Activated CD4-positive, alpha-beta memory T cell treated with anti-CD3 and anti-CD28 coated beads, Interleukin-2, amount 10 ng/mL, durations not matched to agents 7 days and 5 days (primary cell): ENCODE measurements at regions of chr1 and their contacts with region 1.

Region 1: GRCh38 chr1:87328272-87329050 is at the start of gene LMO4:
- DNase-seq: peak; percentile 89
- H3K4me3 Mint-ChIP-seq: peak within 1 kb of the TSS; percentile 89
- H3K27ac Mint-ChIP-seq: peak within 1 kb of the TSS; percentile 90
- H3K4me1 Mint-ChIP-seq: peaks cover 28% of the 10 kb centered on the region
- H3K27me3 Mint-ChIP-seq: peaks cover 5% of the 10 kb centered on the region
- total RNA-seq, gene LMO4: 52.8 to 54.3 TPM

Region 2: DNA sequence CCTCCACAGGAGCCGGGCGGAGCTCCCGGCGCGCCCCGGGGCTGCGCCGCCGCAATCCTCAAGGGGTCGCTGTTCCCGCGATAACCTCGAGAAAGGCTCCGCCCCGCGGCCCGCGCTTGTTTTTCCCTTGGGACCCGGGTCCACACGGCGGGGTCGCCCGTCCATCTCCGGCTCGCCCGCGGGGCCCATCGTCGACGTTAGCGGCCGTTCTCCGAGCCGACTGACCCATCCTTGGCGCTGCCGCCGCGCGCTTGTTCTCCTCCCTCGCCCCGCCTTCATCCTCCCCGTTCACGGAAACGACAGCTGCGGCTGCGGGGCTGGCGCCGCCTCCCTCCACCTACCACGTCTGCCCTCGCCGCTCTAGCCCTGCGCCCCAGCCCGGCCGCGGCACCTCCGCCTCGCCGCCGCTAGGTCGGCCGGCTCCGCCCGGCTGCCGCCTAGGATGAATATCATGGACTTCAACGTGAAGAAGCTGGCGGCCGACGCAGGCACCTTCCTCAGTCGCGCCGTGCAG is 623.9 kb before region 1 on chr1 and contains the start of gene SH3GLB1:
- CTCF ChIA-PET with region 1: interaction called, 3 read pairs
- POLR2A ChIA-PET with region 1: interaction called, 13 read pairs
- DNase-seq: peak; percentile 90
- H3K4me3 Mint-ChIP-seq: peak within 1 kb of the TSS; percentile 97
- H3K27ac Mint-ChIP-seq: peak within 1 kb of the TSS; percentile 94
- H3K4me1 Mint-ChIP-seq: peaks cover 46% of the 10 kb centered on the region
- H3K27me3 Mint-ChIP-seq: no peaks in the 10 kb centered on the region
- total RNA-seq, gene SH3GLB1: 79.6 to 82.8 TPM

Region 3: GRCh38 chr1:87103074-87103473 is 225.4 kb before region 1 on chr1:
- CTCF ChIA-PET with region 1: no interaction called
- POLR2A ChIA-PET with region 1: no interaction called
- DNase-seq: no peak
- H3K4me3 Mint-ChIP-seq: no peak overlapping the region
- H3K27ac Mint-ChIP-seq: no peak overlapping the region
- H3K4me1 Mint-ChIP-seq: no peaks in the 10 kb centered on the region
- H3K27me3 Mint-ChIP-seq: no peaks in the 10 kb centered on the region

Region 4: DNA sequence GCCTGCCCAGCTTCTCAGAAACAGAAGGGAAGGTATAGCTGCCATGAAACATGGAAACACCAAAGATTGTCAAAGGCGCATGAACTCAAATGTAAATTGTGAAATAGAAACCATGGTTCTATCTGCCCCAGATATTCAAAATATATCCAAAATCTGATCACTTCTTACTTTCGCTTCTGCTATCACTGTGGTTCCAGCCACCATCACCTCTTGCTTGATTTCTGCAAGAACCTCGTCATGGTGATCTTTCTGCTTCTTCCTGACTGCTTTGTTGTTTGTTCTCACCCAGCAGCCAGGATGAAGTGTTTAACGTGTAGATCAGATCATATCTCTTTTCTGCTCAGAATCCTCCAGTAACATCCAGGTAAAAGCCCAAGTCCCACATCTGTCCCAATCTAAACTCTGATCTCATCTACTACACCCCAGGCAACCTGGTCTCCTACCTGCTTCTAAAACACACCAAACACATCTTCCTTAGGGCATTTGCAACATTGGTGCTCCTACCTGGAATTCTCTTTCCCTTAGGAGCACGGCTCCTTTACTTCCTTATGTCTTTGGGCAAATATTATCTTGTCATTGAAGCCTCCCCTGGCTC is 10.3 kb before region 1 on chr1:
- CTCF ChIA-PET with region 1: interaction called, 10 read pairs
- POLR2A ChIA-PET with region 1: interaction called, 3 read pairs
- DNase-seq: no peak
- H3K4me3 Mint-ChIP-seq: no peak overlapping the region
- H3K27ac Mint-ChIP-seq: no peak overlapping the region
- H3K4me1 Mint-ChIP-seq: peaks cover 13% of the 10 kb centered on the region
- H3K27me3 Mint-ChIP-seq: peaks cover 20% of the 10 kb centered on the region

Region 5: DNA sequence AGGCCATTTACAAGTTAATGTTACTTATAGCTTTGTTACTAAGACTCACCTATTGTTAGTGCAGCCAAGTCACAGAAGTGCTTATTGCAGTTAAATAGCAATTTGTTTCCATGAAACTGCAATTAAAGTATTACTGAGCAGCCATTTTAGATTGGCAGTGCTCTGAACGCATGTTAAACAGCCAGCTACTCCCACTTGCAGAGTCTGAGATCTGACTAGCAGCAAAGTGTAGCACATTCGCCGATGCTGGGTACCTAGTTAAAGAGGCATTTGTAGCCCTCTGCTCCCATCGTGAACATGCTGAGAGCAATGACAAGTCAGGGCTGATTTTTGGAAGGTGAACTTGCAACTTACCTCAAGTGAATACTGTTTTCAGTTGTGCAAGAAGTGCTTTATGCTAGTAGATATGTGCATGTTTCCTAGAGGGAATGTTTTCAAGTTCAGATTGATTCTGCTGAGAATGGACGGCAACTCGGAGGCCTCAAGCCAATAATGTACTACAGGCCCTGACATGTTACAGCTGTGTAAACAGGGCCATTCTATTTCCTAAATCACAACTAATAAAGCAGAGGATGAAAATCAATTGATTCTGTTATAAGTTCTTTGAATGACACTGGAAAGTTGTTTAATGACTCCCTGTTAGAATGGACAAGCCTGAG is 20.0 kb after region 1 on chr1:
- CTCF ChIA-PET with region 1: interaction called, 4 read pairs
- POLR2A ChIA-PET with region 1: interaction called, 11 read pairs
- DNase-seq: no peak
- H3K4me3 Mint-ChIP-seq: no peak overlapping the region
- H3K27ac Mint-ChIP-seq: no peak overlapping the region
- H3K4me1 Mint-ChIP-seq: peaks cover 3% of the 10 kb centered on the region
- H3K27me3 Mint-ChIP-seq: no peaks in the 10 kb centered on the region

Region 6: DNA sequence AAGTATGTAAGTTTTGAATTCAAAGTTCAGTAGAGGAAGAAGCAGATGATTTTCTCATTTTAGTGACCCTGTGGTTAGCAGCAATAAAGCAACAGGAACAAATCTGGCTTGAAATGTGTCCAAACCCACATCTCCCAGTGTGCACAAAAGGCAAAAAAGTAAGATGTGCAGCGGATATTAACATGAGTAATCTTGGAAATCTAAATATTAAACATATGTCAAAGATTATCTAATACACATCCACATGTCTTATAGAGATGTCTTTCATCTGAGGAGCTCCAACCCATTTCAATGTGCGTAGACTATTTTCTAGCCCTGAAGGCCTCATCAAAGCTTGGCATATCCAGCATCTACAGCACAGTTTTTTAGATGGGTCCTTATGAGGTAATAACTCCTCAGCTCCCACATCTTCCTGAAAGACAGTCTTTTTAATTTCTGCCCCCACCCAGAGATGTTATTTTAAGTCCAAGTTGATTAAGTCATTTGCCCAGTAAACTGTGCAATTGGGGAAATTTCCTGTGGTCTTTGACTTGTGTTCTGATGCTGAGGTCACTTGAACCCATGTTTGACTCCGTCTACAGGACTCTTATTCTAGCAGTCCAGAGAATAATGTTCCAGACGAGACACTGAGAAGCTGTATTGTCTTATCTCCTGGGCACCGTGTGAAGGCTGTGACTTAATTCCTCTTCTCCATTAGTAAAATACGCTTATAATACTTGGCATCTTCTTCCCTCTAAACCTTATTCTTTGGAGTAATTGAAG is 74.0 kb after region 1 on chr1:
- CTCF ChIA-PET with region 1: interaction called, 5 read pairs
- POLR2A ChIA-PET with region 1: interaction called, 52 read pairs
- DNase-seq: no peak
- H3K4me3 Mint-ChIP-seq: no peak overlapping the region
- H3K27ac Mint-ChIP-seq: no peak overlapping the region
- H3K4me1 Mint-ChIP-seq: peaks cover 31% of the 10 kb centered on the region
- H3K27me3 Mint-ChIP-seq: peaks cover 11% of the 10 kb centered on the region

Region 7: GRCh38 chr1:87449348-87449963 is 121.0 kb after region 1 on chr1:
- CTCF ChIA-PET with region 1: interaction called, 9 read pairs
- POLR2A ChIA-PET with region 1: interaction called, 31 read pairs
- DNase-seq: peak; percentile 64
- H3K4me3 Mint-ChIP-seq: peak overlapping the region; percentile 62
- H3K27ac Mint-ChIP-seq: peak overlapping the region; percentile 87
- H3K4me1 Mint-ChIP-seq: peaks cover 25% of the 10 kb centered on the region
- H3K27me3 Mint-ChIP-seq: no peaks in the 10 kb centered on the region

Region 8: DNA sequence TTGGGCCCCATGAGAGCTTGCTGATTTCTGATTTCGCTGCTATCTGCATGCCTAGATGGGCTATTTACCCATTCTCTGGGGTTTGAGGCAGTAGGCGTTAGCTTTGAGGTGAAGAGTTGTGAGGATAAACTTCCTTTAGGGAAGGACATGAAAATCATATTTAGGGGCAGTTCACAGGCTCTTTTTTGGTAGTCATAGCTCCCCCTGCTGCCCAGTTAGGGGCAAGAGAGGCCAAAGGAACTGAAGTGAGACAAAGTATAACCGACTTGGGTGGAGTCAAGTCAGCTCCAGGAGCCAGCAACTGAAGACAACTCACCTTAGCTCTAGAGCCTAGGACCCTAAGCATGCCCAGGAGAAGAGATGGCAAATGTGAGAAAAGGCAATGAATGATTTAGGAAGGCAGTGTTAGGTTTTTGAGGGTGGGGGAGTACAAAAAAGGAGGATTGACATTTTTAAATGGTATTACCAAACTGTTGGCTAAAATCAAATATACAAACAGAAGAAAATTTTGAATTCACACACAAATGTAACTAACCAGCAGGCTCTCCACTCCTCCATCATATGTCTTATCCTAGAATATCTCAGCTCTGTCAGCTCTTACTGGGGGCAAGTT is 625.4 kb after region 1 on chr1:
- CTCF ChIA-PET with region 1: interaction called, 18 read pairs
- POLR2A ChIA-PET with region 1: interaction called, 3 read pairs
- DNase-seq: peak; percentile 54
- H3K4me3 Mint-ChIP-seq: no peak overlapping the region
- H3K27ac Mint-ChIP-seq: no peak overlapping the region
- H3K4me1 Mint-ChIP-seq: no peaks in the 10 kb centered on the region
- H3K27me3 Mint-ChIP-seq: peaks cover 15% of the 10 kb centered on the region